ENCODE measurements at regions of chr17 and their contacts with region 1.

Region 1: DNA sequence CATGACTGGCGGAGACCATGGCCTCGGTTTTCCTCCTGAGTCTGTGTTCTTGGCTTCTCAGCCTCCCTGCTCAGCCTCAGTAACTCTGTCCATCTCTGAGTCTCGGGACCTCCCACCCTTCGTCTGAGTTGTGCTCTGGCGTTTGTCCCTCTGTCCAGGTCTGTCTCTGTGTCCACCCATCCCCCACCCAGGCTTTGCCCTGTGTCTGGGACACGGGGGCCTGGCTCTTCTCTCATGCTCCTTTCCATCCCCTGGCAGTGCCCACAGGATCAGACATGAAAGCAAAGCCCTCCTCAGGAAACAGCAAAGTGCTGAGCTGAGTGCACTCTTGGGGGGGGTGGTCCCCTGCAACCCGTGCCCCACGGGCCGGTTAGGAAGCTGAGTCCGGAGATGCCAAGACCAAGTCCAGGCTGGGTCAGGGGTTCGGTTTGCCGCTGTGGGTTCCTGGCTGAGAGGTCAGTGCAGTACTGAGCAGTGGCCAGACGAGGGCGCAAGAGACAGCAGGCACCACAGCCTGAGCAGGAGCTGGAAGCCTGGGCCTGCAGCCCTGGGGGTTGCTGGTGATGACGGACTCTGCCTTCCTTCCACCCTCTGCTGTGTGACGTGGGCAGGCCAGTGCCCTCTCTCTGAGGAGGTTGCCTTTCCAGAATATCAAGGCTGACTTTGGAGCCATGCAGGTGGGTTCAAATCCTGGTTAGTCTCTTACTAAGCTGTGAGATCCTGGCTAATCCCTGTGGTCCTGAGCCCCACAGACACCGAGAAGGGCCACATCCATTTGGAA is 2.5 kb downstream of the P2RX1 start:
- DNase-seq: peak; percentile 73
- H3K4me3 ChIP-seq: no peak overlapping the region
- H3K27ac ChIP-seq: no peak overlapping the region
- H3K4me1 ChIP-seq: peaks cover 15% of the 10 kb centered on the region
- H3K27me3 ChIP-seq: no peaks in the 10 kb centered on the region
- CTCF ChIP-seq: peak; percentile 97 to 99
- POLR2A ChIP-seq: no peak

Region 2: DNA sequence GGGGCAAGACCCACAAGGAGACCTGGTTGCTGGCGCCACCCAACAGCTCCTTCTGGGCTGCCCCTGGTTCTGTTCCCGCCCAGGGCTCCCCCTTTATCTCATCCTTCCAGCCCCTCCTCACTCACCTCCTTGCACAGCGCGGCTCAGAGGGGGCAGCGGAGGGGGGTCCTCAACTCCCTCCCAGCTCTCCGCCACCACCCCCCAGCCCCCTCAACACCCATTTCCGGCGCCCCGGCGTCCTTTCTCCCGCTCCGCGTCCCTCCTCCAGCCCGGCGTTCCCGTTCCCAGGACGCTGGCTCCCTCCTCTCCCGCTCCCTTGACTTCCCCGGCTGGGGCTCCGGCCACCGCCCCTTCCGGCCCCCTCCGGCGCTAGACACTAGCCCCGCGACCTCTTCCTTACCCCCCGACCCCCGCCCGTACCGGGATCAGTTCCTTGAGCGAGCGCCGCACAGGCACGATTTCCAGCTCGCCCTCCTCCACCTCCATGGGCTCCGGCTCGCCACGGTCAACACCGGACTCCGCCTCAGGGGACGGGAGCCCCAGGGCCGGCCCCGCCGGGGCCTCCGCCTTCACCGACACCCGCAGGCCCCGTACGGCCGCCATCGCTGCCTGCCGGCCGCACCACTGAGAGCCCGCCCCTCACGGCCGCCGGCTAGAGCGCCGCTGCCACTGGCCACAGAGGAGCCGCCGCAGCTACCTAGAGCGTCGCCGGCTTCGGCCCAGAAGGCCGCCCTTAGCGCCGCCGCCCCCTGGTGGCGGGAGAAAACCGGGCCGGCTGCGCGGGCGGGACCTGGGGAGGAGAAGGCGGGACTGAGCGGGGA is 67.9 kb before region 1 on chr17 and contains the start of gene NCBP3:
- CTCF ChIA-PET with region 1: interaction called, 15 read pairs
- POLR2A ChIA-PET with region 1: no interaction called
- dilution Hi-C with region 1: no loop called
- intact Hi-C with region 1: no loop called
- DNase-seq: peak; percentile 93
- H3K4me3 ChIP-seq: peak within 1 kb of the TSS; percentile 75 to 97 (median 79)
- H3K27ac ChIP-seq: peak within 1 kb of the TSS; percentile 67
- H3K4me1 ChIP-seq: peaks cover 9% of the 10 kb centered on the region
- H3K27me3 ChIP-seq: no peaks in the 10 kb centered on the region
- CTCF ChIP-seq: peak; percentile 97
- POLR2A ChIP-seq: peak; percentile 87
- total RNA-seq, gene NCBP3: 51.1 and 52.2 TPM in 2 replicates

Region 3: GRCh38 chr17:3865176-3865575 is 48.5 kb before region 1 on chr17:
- CTCF ChIA-PET with region 1: interaction called, 13 read pairs
- POLR2A ChIA-PET with region 1: no interaction called
- dilution Hi-C with region 1: no loop called
- intact Hi-C with region 1: no loop called
- DNase-seq: no peak
- H3K4me3 ChIP-seq: no peak overlapping the region
- H3K27ac ChIP-seq: no peak overlapping the region
- H3K4me1 ChIP-seq: no peaks in the 10 kb centered on the region
- H3K27me3 ChIP-seq: no peaks in the 10 kb centered on the region
- CTCF ChIP-seq: no peak
- POLR2A ChIP-seq: no peak

Region 4: GRCh38 chr17:3927628-3928340 is 14.1 kb after region 1 on chr17:
- CTCF ChIA-PET with region 1: interaction called, 47 read pairs
- POLR2A ChIA-PET with region 1: no interaction called
- dilution Hi-C with region 1: no loop called
- intact Hi-C with region 1: no loop called
- DNase-seq: no peak
- H3K4me3 ChIP-seq: no peak overlapping the region
- H3K27ac ChIP-seq: no peak overlapping the region
- H3K4me1 ChIP-seq: no peaks in the 10 kb centered on the region
- H3K27me3 ChIP-seq: no peaks in the 10 kb centered on the region
- CTCF ChIP-seq: no peak
- POLR2A ChIP-seq: no peak

Region 5: DNA sequence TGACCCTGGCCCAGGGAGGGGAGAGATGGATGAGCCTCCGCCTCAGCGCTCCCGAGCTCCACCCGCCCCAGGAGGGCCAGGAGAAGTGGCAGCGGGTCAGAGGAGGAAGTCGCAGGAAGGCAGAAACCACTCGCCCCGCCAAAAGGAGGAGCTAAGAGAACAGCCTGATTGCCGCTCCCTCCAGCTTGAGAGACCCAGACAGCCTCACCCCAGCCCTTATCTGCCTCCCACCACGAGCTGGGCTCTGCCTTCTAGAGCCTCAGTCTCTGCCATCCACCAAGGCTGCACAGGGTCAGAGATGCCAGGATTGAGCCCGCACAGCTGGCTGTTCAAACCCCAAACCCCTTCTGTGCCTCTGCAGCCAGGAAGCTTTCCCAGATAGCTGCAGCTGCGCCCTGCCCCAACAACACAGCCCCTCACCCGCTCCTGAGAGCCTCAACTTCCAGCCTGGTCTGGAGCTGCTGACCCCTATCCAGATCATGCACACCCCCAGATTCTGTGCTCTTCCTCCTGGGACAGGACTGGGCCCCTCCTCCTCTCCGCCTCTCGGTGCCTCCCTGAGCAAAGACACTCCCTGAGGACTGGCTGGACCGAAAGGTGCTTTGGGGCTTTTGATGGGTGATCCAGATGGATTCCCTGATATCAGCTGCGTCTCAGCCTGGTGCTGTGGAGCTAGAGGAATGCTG is 51.5 kb after region 1 on chr17:
- CTCF ChIA-PET with region 1: interaction called, 12 read pairs
- POLR2A ChIA-PET with region 1: no interaction called
- dilution Hi-C with region 1: no loop called
- intact Hi-C with region 1: no loop called
- DNase-seq: no peak
- H3K4me3 ChIP-seq: no peak overlapping the region
- H3K27ac ChIP-seq: no peak overlapping the region
- H3K4me1 ChIP-seq: peaks cover 4% of the 10 kb centered on the region
- H3K27me3 ChIP-seq: peaks cover 20 to 27% of the 10 kb centered on the region in 2 experiments
- CTCF ChIP-seq: no peak
- POLR2A ChIP-seq: no peak

Region 6: DNA sequence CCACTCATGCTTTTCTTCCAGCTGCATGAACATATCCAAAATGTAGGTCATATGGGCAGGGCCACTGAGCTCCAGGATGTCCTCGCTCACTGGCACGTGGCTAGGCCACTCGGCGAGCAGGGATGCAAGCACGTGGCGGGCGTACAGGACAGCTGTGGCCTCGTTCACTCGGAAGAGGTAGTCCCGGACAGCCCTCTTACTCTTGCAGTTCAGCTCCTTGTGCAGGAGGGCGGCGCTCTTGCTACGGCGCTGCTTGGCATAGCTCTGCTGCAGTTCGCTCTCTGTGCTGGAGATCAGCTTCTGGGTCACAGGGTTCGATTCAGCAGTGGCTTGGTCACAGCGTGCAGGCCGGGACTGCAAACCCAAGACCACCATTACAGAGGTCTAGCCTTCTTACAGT is 103.7 kb after region 1 on chr17:
- CTCF ChIA-PET with region 1: interaction called, 11 read pairs
- POLR2A ChIA-PET with region 1: no interaction called
- dilution Hi-C with region 1: no loop called
- intact Hi-C with region 1: no loop called
- DNase-seq: no peak
- H3K4me3 ChIP-seq: no peak overlapping the region
- H3K27ac ChIP-seq: no peak overlapping the region
- H3K4me1 ChIP-seq: no peaks in the 10 kb centered on the region
- H3K27me3 ChIP-seq: no peaks in the 10 kb centered on the region
- CTCF ChIP-seq: no peak
- POLR2A ChIP-seq: no peak

Region 7: DNA sequence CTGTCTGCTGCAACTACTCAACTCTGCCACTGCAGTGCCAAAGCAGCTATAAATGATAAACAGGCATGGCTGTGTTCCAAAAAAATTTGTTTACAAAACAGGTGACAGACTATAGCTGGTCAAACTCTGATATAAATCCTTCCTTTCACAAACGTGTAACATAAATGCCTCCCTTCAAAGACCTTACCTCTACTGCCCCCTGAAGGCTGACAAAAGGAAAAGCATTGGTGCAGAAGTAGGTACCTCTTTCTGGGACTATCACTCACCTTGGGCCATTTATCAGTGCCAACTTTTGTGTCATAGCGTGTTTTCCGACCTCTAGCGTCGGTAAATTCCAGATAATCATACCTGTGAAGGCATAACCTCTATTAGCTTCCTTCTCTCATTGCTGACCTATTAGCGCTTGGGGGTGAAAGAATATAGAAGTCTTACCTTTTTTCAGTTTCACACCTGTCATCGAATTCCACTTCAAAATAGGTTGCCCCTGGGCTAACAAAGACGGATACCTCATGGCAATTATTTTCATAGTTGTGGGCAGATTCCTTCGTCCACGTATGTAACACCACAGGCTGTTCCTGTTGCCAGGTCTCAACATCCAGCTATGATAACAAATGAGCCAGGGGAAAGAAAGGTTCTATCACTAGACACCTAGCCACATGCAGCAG is 161.2 kb after region 1 on chr17:
- CTCF ChIA-PET with region 1: interaction called, 44 read pairs
- POLR2A ChIA-PET with region 1: no interaction called
- dilution Hi-C with region 1: no loop called
- intact Hi-C with region 1: loop called (anchors 2 kb)
- DNase-seq: peak; percentile 43
- H3K4me3 ChIP-seq: no peak overlapping the region
- H3K27ac ChIP-seq: no peak overlapping the region
- H3K4me1 ChIP-seq: peaks cover 12% of the 10 kb centered on the region
- H3K27me3 ChIP-seq: no peaks in the 10 kb centered on the region
- CTCF ChIP-seq: peak; percentile 61 to 62
- POLR2A ChIP-seq: no peak

Measured in endothelial cell of umbilical vein (primary cell).